ENCODE measurements at regions of chr14 and their contacts with region 1.

Region 1: GRCh38 chr14:70600382-70601157 is at the start of gene MED6:
- DNase-seq: peak; percentile 96
- H3K4me3 ChIP-seq: peak within 1 kb of the TSS; percentile 62 to 97 (median 75)
- H3K27ac ChIP-seq: peak within 1 kb of the TSS; percentile 67 to 80 (median 74)
- H3K4me1 ChIP-seq: peaks cover 15 to 21% (median 18%) of the 10 kb centered on the region in 4 donors
- H3K27me3 ChIP-seq: no peaks in the 10 kb centered on the region
- CTCF ChIP-seq: no peak
- EP300 ChIP-seq: no peak
- POLR2A ChIP-seq: no peak
- total RNA-seq, gene MED6: 19.5 to 21.7 (median 20.5) TPM

Region 2: DNA sequence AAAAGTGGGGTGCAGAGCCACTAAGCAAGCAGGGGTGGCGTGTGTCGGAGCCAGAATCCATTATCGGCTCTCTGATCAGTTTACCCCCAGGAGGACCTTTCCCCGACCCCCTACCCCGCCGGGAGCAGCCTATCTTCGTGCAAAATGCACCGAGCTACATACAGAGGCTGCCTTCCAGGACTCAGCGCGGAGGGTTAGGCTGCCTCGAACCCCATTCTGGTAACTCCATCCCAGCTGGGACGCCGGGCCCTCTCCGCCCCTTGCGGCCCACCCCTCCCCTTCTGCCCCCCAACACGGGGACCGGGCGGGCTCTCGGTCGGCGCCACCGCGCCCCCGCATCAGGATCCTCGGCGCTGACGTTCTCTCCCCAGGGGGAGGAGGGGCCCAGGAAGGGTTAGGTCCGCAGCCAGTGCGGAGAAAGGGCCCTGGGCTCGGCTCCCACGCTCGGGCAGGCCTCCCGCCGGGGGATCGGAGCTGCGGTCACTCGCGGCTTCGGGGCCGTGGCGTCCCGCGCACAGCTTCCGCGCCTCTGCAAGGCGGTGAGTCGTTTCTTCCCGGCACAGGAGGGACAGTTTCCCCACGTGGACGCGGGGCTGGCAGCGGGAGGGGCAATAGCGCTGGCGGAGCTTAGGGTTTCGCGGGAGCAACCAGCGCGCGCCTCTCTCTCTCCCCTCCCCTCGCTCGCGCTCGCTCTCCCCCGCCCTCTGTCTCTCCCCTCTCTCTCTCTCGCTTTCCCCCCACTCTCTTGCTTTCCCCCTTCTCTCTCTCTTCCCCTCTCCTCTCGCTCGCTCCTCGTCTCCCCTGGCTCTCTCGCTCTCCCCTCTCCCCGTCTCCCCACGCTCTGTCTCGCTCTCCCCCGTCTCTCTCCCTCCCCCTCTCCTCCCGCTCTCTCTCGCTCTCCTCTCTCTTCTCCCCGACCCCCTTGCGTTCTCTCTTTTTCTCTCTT is 221.3 kb after region 1 on chr14:
- intact Hi-C with region 1: loop called (anchors 5 kb)
- DNase-seq: no peak
- H3K4me3 ChIP-seq: peak overlapping the region; percentile 58 to 76 (median 68)
- H3K27ac ChIP-seq: peak overlapping the region in 3 of 4 donors; percentile 32 to 40 (median 39)
- H3K4me1 ChIP-seq: peaks cover 15 to 32% (median 25%) of the 10 kb centered on the region in 4 donors
- H3K27me3 ChIP-seq: peaks cover 0 to 29% (median 0%) of the 10 kb centered on the region in 4 donors
- CTCF ChIP-seq: no peak
- EP300 ChIP-seq: no peak
- POLR2A ChIP-seq: no peak

Measured in esophagus muscularis mucosa (tissue), 4 donors.